Colonic mucosa (tissue), 4 donors: ENCODE measurements at regions of chr4 and their contacts with region 1.

Region 1: DNA sequence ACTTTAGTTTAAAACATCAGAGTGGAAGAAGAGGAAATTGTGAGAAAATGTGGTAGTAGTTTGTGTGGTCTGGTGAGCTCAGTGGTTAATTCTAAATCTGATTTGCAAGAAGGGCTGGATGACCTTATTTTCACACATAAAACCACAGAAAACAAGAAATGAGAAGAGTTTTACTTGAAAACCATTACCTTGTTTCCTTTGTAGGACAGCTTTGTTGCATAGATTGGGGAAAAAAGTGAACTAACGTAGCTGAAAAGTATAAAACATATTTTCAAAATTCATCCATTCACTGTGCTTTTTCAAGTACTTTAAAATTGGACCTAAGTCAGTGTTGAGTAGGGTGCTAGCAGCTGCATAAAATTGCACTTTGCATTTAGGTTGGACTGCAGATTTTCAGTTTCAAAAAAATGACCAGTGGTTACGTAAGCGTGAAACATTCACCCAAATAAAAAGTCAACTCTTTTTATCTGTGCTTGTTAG is 211.3 kb downstream of the ARHGAP10 start:
- DNase-seq: no peak
- H3K4me3 ChIP-seq: no peak overlapping the region
- H3K27ac ChIP-seq: no peak overlapping the region
- H3K4me1 ChIP-seq: no peaks in the 10 kb centered on the region
- H3K27me3 ChIP-seq: no peaks in the 10 kb centered on the region
- CTCF ChIP-seq: no peak

Region 2: GRCh38 chr4:148056869-148057268 is 113.7 kb after region 1 on chr4:
- intact Hi-C with region 1: loop called (anchors 10 kb)
- DNase-seq: peak; percentile 58
- H3K4me3 ChIP-seq: no peak overlapping the region
- H3K27ac ChIP-seq: no peak overlapping the region
- H3K4me1 ChIP-seq: peaks cover 8% of the 10 kb centered on the region
- H3K27me3 ChIP-seq: no peaks in the 10 kb centered on the region
- CTCF ChIP-seq: peak; percentile 20